Caki2 (cell line): ENCODE measurements at regions of chr20 and their contacts with region 1.

Region 1: GRCh38 chr20:1979106-1979779 is 14.6 kb downstream of the PDYN start:
- DNase-seq: no peak

Region 2: DNA sequence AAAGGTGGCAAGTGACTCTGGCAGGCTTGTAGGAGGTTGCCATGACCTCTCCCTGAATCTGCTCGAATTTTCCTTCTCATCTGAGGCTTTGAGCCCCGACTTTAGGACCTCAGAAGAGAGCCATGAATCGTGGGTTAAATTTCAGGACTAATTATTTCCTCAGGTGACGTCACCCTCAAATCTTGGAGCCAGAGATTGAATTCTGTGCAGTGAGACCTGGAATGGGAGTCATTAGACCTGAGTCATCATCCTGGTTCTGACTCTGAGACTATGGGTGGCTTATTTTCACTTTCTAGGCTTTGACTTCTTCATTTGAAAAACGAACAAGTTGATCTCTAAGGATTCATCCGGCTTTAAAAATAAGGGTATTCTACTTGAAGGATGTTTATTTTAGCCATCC is 63.2 kb after region 1 on chr20:
- in situ Hi-C with region 1: loop called (anchors 10 kb)
- DNase-seq: peak; percentile 26

Region 3: DNA sequence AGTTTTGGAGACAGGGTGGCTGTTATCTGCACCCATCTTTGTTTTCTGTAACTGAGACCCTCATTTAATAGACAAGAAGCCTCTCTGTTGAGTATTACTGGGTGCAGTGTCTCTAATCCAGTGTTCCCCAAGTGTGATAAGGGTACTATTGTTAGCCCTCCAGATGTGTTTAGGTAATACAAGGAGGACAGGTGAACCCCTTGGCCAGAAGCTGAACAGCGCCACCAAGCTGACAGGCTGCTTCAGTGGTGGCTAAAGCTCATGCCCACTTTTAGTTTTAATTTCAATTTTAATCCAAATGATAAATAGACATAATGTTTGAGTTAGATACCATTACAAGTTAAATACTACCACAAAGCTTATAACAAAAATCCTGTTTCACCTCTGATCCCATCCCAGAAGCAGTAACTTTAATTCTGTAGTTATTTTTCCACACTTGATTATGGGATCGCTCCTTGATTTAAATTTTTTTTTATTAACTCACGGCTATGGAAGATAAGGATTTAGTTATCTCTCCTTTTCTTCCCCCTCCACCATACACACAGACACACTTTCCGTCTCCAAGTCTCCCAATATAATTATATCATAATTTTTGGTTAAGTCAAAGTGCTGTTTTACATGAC is 114.0 kb after region 1 on chr20:
- in situ Hi-C with region 1: loop called (anchors 10 kb)
- DNase-seq: no peak